HCT116 (cell line): ENCODE measurements at regions of chr6 and their contacts with region 1.

Region 1: DNA sequence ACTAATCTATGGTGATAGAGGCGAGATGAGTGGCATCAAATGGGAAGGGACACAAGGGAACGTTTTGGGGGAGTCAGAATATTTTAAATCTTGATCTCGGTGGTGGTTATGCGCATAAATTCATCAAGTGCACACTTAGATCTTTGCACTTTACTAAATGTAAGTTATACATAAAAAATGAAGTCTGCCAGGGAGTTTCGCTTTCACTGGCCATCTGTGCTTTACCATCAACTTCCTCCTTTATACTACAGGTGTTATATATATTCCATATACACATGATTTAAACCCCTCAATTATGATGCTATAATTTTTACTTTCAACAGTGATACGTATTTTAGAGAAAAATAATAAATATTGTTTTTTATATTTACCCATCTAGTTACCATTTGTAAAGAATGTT is 97.6 kb upstream of the AKIRIN2 start:
- DNase-seq: no peak
- ATAC-seq: no peak
- H3K4me3 ChIP-seq: no peak overlapping the region
- H3K27ac ChIP-seq: no peak overlapping the region
- H3K4me1 ChIP-seq: peaks cover 0 to 5% of the 10 kb centered on the region in 2 experiments; a peak in 1 of 4 replicates
- H3K27me3 ChIP-seq: no peaks in the 10 kb centered on the region
- CTCF ChIP-seq: no peak
- POLR2A ChIP-seq: no peak
- RAD21 ChIP-seq: no peak

Region 2: DNA sequence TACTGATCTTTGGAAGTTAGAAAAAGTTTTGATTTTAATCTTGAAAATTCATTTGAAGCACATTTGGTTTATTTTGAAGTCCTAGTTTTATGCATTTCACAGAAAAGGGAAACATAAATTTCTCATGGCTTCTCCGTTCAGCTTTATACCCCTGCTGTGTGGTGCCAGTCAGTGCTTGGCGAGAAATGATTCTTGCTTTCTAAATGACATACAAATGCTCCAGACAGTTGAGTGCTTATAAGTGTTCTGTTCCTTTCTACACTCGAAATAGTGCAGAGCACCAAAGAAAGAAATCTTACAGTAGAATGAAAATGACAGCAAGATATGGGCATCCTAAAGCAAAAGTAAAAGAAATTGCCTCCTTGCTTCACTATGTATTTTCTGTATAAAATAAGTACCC is 653.3 kb before region 1 on chr6:
- CTCF ChIA-PET with region 1: no interaction called
- POLR2A ChIA-PET with region 1: no interaction called
- RAD21 ChIA-PET with region 1: no interaction called
- intact Hi-C with region 1: loop called (anchors 10 kb)
- DNase-seq: no peak
- ATAC-seq: no peak
- H3K4me3 ChIP-seq: no peak overlapping the region
- H3K27ac ChIP-seq: no peak overlapping the region
- H3K4me1 ChIP-seq: no peaks in the 10 kb centered on the region
- H3K27me3 ChIP-seq: peaks cover 4% of the 10 kb centered on the region; the same call in 1 of the 2 replicates
- CTCF ChIP-seq: no peak
- POLR2A ChIP-seq: no peak
- RAD21 ChIP-seq: no peak